ENCODE measurements at regions of chrX and their contacts with region 1.

Region 1: DNA sequence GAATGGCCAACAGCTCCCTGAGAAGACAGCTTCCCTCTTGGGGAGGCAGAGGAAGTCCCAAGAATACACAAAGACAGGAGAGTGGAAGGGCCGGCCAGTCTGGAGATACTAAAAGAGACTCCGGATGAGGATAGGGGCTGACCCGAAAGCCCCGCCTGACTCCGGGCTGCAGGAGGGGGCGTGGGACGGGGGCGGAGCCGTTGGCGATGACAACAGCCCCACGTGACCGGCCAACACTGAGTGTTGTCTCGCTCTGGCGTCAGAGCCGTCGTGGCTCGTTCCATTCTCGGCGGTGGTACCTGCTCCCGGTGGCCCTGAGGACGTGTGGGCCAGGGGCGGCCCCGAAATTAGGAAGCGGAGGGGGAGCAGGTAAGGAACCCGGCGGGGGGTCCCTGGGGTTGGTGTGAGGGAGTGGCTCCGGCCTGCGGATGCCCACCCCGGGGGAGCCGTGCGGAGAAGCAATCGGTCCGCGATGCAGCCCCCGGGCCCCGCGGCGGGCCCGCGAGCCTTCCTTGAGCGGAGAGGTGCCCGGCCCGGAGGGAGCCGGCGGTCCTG is at the start of gene BEX4:
- DNase-seq: no peak
- ATAC-seq: peak; percentile 92
- H3K4me3 ChIP-seq: peak within 1 kb of the TSS; percentile 31; the same call in 1 of the 2 replicates
- H3K27ac ChIP-seq: no peak within 1 kb of the TSS
- H3K4me1 ChIP-seq: no peaks in the 10 kb centered on the region
- H3K27me3 ChIP-seq: no peaks in the 10 kb centered on the region; a peak in 1 of 4 replicates
- CTCF ChIP-seq: no peak
- EP300 ChIP-seq: no peak
- POLR2A ChIP-seq: peak; percentile 88
- RAD21 ChIP-seq: no peak
- polyA plus RNA-seq, gene BEX4: 0.76 to 1.9 TPM

Region 2: GRCh38 chrX:102604327-102604726 is 610.6 kb before region 1 on chrX:
- CTCF ChIA-PET with region 1: no interaction called
- POLR2A ChIA-PET with region 1: no interaction called
- RAD21 ChIA-PET with region 1: no interaction called
- SMC1A ChIA-PET with region 1: no interaction called
- in situ Hi-C with region 1: no loop called
- intact Hi-C with region 1: no loop called
- DNase-seq: no peak
- ATAC-seq: peak; percentile 13
- H3K4me3 ChIP-seq: no peak overlapping the region
- H3K27ac ChIP-seq: no peak overlapping the region
- H3K4me1 ChIP-seq: no peaks in the 10 kb centered on the region
- H3K27me3 ChIP-seq: no peaks in the 10 kb centered on the region
- CTCF ChIP-seq: no peak
- EP300 ChIP-seq: no peak
- POLR2A ChIP-seq: no peak
- RAD21 ChIP-seq: no peak

Region 3: DNA sequence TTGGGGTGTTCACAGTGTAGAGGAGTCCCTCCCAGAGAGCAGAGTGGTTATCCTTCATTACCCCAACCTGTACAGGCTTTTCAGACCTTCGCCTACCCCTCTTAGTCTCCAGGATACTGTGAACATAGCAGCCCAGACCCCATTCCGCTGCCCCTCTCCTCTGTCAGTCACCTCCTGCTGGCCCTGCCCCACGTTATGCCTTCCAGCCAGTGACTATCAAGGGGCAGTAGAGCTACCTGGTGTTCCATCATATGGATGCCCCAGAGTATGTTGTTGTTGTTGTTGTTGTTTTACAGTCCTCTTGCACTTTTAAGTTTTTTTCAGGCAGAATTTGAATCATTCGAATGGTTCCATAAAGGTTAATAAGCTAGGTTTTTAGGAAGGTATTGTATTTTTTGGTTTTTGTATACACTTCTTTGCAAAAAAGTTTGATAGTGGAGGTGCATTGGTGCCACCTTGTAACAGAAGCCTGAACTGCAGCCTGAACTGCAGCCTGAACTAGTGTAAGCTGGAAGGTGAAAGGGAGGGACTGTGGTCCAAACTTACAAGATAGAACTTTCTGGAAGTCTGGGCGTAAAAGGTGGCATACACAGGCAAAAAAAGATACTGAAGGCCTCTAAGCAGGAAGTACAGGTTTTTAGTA is 379.3 kb before region 1 on chrX:
- CTCF ChIA-PET with region 1: no interaction called
- POLR2A ChIA-PET with region 1: no interaction called
- RAD21 ChIA-PET with region 1: no interaction called
- SMC1A ChIA-PET with region 1: no interaction called
- in situ Hi-C with region 1: no loop called
- intact Hi-C with region 1: no loop called
- DNase-seq: no peak
- ATAC-seq: peak; percentile 67; the same call in 2 of the 3 replicates
- H3K4me3 ChIP-seq: no peak overlapping the region
- H3K27ac ChIP-seq: no peak overlapping the region
- H3K4me1 ChIP-seq: no peaks in the 10 kb centered on the region
- H3K27me3 ChIP-seq: no peaks in the 10 kb centered on the region
- CTCF ChIP-seq: peak; percentile 46 to 50 (median 49); a peak in 5 of 6 replicates
- EP300 ChIP-seq: no peak
- POLR2A ChIP-seq: no peak
- RAD21 ChIP-seq: peak; percentile 48

Region 4: DNA sequence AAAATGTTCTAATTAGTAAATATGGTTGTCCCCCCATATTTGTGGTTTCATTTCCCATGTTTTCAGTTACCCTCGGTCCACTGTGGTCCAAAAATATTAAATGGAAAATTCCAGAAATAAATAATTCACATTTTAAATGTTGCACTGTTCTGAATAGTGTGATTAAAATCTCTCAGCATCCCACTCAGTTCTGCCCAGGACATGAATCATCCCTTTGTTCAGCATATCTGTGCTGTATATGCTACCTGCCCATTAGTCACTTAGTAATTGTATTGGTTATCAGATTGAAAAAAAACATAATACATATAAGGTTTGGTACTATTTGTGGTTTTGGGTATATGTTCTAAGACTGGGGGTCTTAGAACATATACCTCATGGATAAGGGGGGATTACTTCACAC is 66.9 kb before region 1 on chrX:
- CTCF ChIA-PET with region 1: no interaction called
- POLR2A ChIA-PET with region 1: no interaction called
- RAD21 ChIA-PET with region 1: no interaction called
- SMC1A ChIA-PET with region 1: no interaction called
- in situ Hi-C with region 1: no loop called
- intact Hi-C with region 1: no loop called
- DNase-seq: no peak
- ATAC-seq: no peak
- H3K4me3 ChIP-seq: no peak overlapping the region
- H3K27ac ChIP-seq: no peak overlapping the region
- H3K4me1 ChIP-seq: no peaks in the 10 kb centered on the region
- H3K27me3 ChIP-seq: no peaks in the 10 kb centered on the region
- CTCF ChIP-seq: no peak
- EP300 ChIP-seq: no peak
- POLR2A ChIP-seq: no peak
- RAD21 ChIP-seq: no peak

Region 5: GRCh38 chrX:103248553-103248952 is 33.6 kb after region 1 on chrX:
- CTCF ChIA-PET with region 1: interaction called, 11 read pairs
- POLR2A ChIA-PET with region 1: no interaction called
- RAD21 ChIA-PET with region 1: interaction called, 4 read pairs
- SMC1A ChIA-PET with region 1: interaction called, 3 read pairs
- in situ Hi-C with region 1: no loop called
- intact Hi-C with region 1: loop called (anchors 2 kb)
- DNase-seq: no peak
- ATAC-seq: peak; percentile 60; the same call in 2 of the 3 replicates
- H3K4me3 ChIP-seq: no peak overlapping the region
- H3K27ac ChIP-seq: no peak overlapping the region
- H3K4me1 ChIP-seq: peaks cover under 1% of the 10 kb centered on the region; the same call in 1 of the 2 replicates
- H3K27me3 ChIP-seq: no peaks in the 10 kb centered on the region
- CTCF ChIP-seq: peak; percentile 27 to 37 (median 34); a peak in 3 of 6 replicates
- EP300 ChIP-seq: no peak
- POLR2A ChIP-seq: no peak
- RAD21 ChIP-seq: peak; percentile 40

Region 6: GRCh38 chrX:103464774-103465117 is 249.8 kb after region 1 on chrX:
- CTCF ChIA-PET with region 1: interaction called, 30 read pairs
- POLR2A ChIA-PET with region 1: no interaction called
- RAD21 ChIA-PET with region 1: interaction called, 8 read pairs
- SMC1A ChIA-PET with region 1: interaction called, 15 read pairs
- in situ Hi-C with region 1: no loop called
- intact Hi-C with region 1: loop called (anchors 1 kb)
- DNase-seq: peak; percentile 43
- ATAC-seq: peak; percentile 98
- H3K4me3 ChIP-seq: no peak overlapping the region
- H3K27ac ChIP-seq: no peak overlapping the region
- H3K4me1 ChIP-seq: no peaks in the 10 kb centered on the region
- H3K27me3 ChIP-seq: no peaks in the 10 kb centered on the region
- CTCF ChIP-seq: peak; percentile 71 to 78 (median 73)
- EP300 ChIP-seq: no peak
- POLR2A ChIP-seq: no peak
- RAD21 ChIP-seq: peak; percentile 78

Region 7: DNA sequence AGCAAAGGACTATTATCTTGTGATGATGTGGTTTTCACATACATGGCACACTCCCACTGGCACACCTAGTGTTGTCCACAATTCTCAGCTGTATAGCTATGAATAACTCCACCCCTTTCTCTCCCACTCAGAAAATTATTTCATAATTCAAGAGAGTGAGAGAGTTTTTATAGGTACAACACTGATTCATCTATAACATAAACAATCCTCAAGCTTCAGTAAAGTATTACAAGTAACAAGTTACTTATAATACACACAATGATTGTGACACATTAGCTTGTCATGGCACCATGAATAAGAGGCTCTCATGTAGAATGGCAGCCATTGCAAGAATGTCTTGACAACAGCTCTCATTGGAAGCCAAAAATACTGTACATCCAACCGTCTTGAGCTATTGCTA is 260.4 kb after region 1 on chrX:
- CTCF ChIA-PET with region 1: no interaction called
- POLR2A ChIA-PET with region 1: no interaction called
- RAD21 ChIA-PET with region 1: no interaction called
- SMC1A ChIA-PET with region 1: no interaction called
- in situ Hi-C with region 1: loop called (anchors 5 kb)
- intact Hi-C with region 1: no loop called
- DNase-seq: no peak
- ATAC-seq: no peak
- H3K4me3 ChIP-seq: no peak overlapping the region
- H3K27ac ChIP-seq: no peak overlapping the region
- H3K4me1 ChIP-seq: no peaks in the 10 kb centered on the region
- H3K27me3 ChIP-seq: no peaks in the 10 kb centered on the region; a peak in 1 of 4 replicates
- CTCF ChIP-seq: no peak
- EP300 ChIP-seq: no peak
- POLR2A ChIP-seq: no peak
- RAD21 ChIP-seq: no peak

Measured in GM12878 (cell line).